PC-9 (cell line): ENCODE measurements at regions of chr10 and their contacts with region 1.

Region 1: GRCh38 chr10:101141616-101142532 is 10.8 kb downstream of the TLX1 start:
- DNase-seq: peak; percentile 36 to 70
- H3K4me3 ChIP-seq: no peak overlapping the region
- H3K27ac ChIP-seq: no peak overlapping the region
- H3K4me1 ChIP-seq: no peaks in the 10 kb centered on the region
- H3K27me3 ChIP-seq: peaks cover 15% of the 10 kb centered on the region; the same call in 1 of the 2 replicates
- CTCF ChIP-seq: peak; percentile 90

Region 2: GRCh38 chr10:101060036-101060950 is 81.6 kb before region 1 on chr10:
- CTCF ChIA-PET with region 1: interaction called, 3 read pairs
- POLR2A ChIA-PET with region 1: no interaction called
- intact Hi-C with region 1: loop called (anchors 1 kb)
- DNase-seq: peak; percentile 74 to 85
- H3K4me3 ChIP-seq: peak overlapping the region; percentile 62
- H3K27ac ChIP-seq: peak overlapping the region; percentile 86
- H3K4me1 ChIP-seq: peaks cover 19% of the 10 kb centered on the region
- H3K27me3 ChIP-seq: no peaks in the 10 kb centered on the region
- CTCF ChIP-seq: peak; percentile 85

Region 3: DNA sequence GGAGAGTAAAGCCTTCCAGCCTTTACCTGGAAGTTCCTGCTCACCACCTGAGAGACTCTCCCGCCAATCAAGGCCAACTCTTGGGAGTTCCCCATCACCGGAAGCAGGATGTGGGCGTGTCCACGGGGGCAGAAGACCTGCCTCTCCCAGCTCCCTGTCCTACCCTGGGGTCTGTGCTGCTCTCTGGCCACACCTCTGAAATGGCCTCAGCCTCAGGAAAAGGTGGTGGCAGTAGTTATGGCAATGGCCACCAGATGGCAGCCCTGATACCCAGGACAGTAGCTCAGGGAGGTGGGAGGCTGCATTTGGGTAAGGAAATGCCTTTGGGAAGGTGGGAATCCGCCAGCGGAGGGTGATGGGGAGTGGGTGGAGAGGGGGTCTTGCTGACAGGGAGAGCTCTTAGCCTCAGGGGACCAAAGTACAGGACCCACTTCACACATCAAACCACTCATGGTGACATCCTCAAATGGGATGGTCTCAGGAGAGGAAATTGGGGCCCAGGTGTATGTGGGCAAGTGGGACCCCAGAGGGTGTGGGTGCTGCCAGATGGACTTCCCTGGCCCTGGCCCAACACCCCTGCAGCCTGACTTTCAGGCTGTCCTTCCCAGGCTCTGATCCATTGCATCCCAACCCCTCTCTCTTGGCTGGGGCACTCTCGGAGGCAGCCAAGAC is 46.2 kb before region 1 on chr10:
- CTCF ChIA-PET with region 1: interaction called, 20 read pairs
- POLR2A ChIA-PET with region 1: no interaction called
- intact Hi-C with region 1: loop called (anchors 1 kb)
- DNase-seq: peak; percentile 55 to 68
- H3K4me3 ChIP-seq: no peak overlapping the region
- H3K27ac ChIP-seq: no peak overlapping the region
- H3K4me1 ChIP-seq: no peaks in the 10 kb centered on the region
- H3K27me3 ChIP-seq: peaks cover 38% of the 10 kb centered on the region
- CTCF ChIP-seq: peak; percentile 79

Region 4: GRCh38 chr10:101161494-101162299 is 19.8 kb after region 1 on chr10:
- CTCF ChIA-PET with region 1: no interaction called
- POLR2A ChIA-PET with region 1: no interaction called
- intact Hi-C with region 1: no loop called
- DNase-seq: peak; percentile 44 to 48
- H3K4me3 ChIP-seq: no peak overlapping the region
- H3K27ac ChIP-seq: no peak overlapping the region
- H3K4me1 ChIP-seq: no peaks in the 10 kb centered on the region
- H3K27me3 ChIP-seq: peaks cover 27% of the 10 kb centered on the region
- CTCF ChIP-seq: peak; percentile 88